ENCODE measurements at regions of chr22 and their contacts with region 1.

Region 1: DNA sequence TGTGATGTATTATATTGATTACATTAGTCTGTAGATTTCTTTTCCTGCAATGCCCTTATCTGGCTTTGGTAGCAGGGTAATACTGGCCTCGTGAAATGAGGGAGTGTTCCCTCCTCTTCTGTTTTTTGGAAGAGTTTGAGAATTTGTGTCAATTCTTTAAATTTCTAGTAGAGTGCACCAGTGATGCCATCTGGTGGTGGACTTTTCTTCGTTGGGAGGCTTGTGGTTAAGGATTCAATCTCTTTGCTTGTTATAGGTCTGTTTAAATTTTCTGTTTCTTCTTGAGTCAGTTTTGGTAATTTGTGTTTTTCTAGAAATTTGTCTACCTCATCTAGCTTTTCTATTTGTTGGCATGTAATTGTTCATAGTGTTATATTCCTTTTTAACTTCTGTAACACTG is 18.9 kb downstream of the SHANK3 start:
- DNase-seq: no peak
- H3K4me3 ChIP-seq: no peak overlapping the region
- CTCF ChIP-seq: peak; percentile 20

Region 2: DNA sequence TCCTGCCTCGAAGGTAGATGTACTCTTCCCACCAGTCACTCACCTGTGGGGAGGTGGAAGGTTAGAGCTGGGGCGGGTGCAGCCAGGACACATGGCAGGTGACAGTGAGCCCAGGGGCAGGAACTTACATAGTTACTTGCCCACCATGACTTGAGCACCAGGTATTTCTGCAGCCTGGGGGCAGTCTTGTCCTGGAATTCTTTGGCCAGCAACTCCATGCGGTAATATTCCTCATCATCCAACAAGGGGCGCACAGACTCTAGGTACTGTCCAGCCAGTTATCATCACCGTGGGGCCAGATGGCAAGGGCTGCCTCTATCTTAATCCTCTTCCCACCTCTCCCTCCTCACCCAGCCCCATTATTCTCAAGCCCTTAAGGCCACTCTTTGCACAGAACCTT is 115.5 kb before region 1 on chr22:
- CTCF ChIA-PET with region 1: interaction called, 36 read pairs
- POLR2A ChIA-PET with region 1: no interaction called
- DNase-seq: no peak
- H3K4me3 ChIP-seq: no peak overlapping the region
- CTCF ChIP-seq: peak; percentile 25

Region 3: DNA sequence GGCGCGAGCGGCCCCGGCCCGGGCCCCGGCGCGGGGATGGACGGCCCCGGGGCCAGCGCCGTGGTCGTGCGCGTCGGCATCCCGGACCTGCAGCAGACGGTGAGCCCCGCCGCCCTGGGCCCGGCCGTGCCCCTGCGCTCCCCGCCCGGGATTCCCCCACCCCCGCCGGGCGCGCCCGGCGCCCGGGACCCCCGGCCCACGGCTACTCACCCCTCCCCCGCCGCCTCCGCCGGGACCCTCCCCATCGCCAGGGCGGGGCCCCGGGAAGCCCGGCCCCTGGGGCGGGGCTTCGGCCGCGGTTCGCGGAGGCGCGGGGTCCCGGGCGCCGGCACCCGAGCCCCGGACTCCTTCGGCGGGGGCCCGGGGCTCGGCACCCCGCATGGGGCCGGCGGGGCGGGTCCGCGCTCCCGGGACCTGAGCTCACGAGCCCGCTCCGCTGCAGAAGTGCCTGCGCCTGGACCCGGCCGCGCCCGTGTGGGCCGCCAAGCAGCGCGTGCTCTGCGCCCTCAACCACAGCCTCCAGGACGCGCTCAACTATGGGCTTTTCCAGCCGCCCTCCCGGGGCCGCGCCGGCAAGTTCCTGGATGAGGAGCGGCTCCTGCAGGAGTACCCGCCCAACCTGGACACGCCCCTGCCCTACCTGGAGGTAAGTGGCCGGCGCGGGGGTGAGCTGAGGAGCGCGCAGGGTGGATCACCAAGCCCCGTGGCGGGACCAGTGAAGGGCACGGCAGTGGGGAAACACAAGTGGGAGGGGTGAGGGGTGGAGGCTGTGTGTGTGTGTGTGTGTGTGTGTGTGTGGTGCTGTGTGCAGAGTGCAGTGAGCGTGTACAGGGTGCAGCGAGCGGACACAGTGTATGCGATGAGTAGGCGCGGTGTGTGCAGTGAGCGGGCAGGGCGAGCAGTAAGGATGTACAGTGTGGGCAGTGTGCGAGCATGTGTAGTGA is 16.6 kb before region 1 on chr22:
- CTCF ChIA-PET with region 1: interaction called, 12 read pairs
- POLR2A ChIA-PET with region 1: no interaction called
- DNase-seq: no peak
- H3K4me3 ChIP-seq: peak overlapping the region; percentile 15; the same call in 1 of the 2 replicates
- CTCF ChIP-seq: no peak

Region 4: GRCh38 chr22:50720301-50720845 is 28.9 kb after region 1 on chr22:
- CTCF ChIA-PET with region 1: no interaction called
- POLR2A ChIA-PET with region 1: no interaction called
- DNase-seq: no peak
- H3K4me3 ChIP-seq: no peak overlapping the region
- CTCF ChIP-seq: no peak

Measured in AG04449 (cell line).